ENCODE measurements at regions of chr3 and their contacts with region 1.

Region 1: DNA sequence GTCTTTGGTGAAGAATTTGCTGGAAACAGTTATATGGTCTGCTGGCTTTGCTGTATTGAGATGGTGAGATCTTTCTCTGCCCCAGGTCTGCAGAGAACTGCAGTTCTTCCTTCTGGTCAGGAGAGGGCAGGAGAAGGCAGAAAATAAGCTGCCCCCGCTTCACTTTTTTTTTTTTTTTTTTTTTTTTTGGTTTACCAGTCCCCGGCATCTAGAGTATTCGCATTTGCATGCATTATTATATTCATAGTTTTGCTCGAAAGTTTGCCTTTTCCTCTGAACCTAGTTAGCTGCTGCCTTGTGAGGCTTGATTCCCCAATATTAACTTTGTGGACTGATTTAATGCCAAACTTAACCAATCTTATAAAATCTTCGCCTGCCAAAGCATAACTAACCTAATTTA is 10.6 kb upstream of the PARL start:
- ATAC-seq: peak; percentile 53 to 80 (median 62)
- H3K4me3 ChIP-seq: no peak overlapping the region
- H3K27ac ChIP-seq: no peak overlapping the region
- H3K4me1 ChIP-seq: peaks cover 0 to 5% of the 10 kb centered on the region in 2 donors

Region 2: GRCh38 chr3:184129012-184129411 is 233.7 kb after region 1 on chr3:
- in situ Hi-C with region 1: loop called in 2 of 9 experiments (anchors 10 to 25 kb)
- ATAC-seq: peak in 7 of 8 experiments; percentile 53 to 85 (median 60)
- H3K4me3 ChIP-seq: no peak overlapping the region
- H3K27ac ChIP-seq: no peak overlapping the region
- H3K4me1 ChIP-seq: peaks cover 0 to 3% of the 10 kb centered on the region in 2 donors

Region 3: GRCh38 chr3:184380191-184380626 is 484.9 kb after region 1 on chr3:
- in situ Hi-C with region 1: no loop called
- ATAC-seq: peak; percentile 15 to 77 (median 60)
- H3K4me3 ChIP-seq: peak overlapping the region; percentile 49 to 89 (median 54)
- H3K27ac ChIP-seq: peak overlapping the region in 1 of 2 donors; percentile 82
- H3K4me1 ChIP-seq: peaks cover 18 to 31% of the 10 kb centered on the region in 2 donors